Left ventricle myocardium inferior (tissue), 1 donor: ENCODE measurements at regions of chr4 and their contacts with region 1.

Region 1: DNA sequence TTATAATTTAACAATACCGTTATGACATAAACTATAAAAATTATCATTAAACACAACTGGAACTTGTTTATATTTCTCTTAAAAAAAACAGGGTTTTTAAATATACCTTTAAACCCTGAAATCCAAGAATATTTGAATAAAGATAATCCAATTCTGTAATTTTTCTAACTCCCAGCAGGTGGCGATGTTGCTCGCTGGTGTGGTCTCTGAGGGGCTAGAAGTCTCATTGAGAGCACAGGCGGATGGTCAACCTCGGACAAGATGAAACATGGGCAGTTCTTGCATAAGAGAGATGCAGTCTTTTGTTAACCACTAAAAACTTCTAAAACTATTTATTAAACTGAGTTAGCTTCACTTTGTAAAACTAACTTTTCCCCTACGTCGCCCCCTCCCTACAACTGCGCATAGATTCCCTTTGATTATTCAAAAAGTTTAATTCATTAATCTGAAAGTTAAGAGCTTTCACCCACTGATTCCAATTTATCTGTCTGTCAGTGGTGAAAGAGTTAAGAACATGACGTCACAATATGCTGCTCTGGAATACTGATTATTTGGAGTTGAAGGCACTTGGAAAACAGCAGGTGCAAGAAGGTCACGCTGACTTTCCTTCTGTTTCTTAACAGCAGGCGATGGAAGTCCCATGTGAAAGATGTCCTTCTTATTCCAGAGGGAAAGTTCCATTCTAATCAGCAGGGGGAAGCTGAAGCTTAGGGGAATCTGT is 29.5 kb downstream of the DMP1 start:
- DNase-seq: peak; percentile 36
- H3K4me3 ChIP-seq: no peak overlapping the region
- H3K27ac ChIP-seq: peak overlapping the region; percentile 78
- H3K4me1 ChIP-seq: peaks cover 28% of the 10 kb centered on the region
- H3K27me3 ChIP-seq: no peaks in the 10 kb centered on the region
- CTCF ChIP-seq: peak; percentile 82

Region 2: DNA sequence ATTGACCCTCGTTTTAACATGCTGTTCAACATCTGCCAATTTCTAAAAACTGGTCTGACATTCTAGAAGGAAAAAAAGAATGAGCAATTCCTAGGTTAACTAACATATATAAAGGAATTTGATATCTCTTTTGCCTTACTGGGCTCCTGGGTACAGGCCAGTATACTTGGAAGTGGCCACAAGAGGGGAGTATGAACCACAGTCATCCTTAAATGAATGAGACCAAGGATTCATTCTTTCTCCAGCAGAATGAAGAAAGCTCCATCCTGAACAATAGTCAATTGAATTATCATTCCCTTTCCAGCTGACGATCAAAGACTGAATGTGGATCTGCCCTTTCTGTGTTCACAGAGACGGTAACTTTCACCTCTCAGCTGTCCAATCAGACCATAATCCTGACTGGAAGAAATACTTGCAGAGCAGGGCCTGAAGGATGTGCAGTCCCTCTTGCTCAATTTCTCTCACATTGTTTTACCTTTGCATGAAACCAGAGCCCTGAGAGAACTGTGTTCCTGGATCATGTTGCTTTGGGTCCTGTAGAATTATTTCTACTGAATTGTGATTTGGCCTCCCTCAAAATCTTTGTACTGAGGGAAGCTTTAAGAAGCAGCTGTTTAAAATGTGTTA is 135.7 kb before region 1 on chr4:
- intact Hi-C with region 1: loop called (anchors 10 kb)
- DNase-seq: no peak
- H3K4me3 ChIP-seq: no peak overlapping the region
- H3K27ac ChIP-seq: peak overlapping the region; percentile 81
- H3K4me1 ChIP-seq: peaks cover 31% of the 10 kb centered on the region
- H3K27me3 ChIP-seq: no peaks in the 10 kb centered on the region
- CTCF ChIP-seq: peak; percentile 73

Region 3: DNA sequence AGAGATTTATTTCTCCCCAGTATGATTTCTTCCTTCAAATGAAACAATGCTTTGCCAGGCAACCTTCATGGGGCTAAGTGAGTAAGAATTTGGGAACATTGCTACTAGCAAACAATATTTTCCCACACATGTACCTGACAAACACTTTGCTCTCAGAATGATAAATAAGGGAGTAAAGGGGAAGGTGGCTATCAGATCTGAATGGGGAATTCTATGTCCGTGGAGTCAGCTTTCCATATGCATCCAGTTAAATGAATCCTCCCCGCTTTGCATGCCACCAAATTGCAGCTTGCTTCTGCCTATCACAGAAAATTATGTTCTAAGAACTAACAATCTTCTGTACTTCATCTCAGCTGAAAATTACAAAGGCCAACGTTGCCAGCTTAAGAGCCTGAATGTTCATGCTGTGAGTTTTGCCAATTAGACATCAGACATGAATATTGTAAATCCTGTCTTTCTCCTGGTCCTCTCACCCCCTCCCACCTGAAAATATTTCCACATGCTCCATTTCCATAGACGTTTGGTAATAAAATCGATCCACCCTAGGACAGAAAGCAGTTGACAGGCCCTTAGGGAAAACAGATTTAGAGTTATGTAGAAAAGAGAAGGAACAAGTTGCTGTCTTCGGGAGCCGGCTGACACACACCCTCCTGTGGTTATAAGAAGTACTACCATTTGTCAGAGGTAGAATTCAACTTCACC is 159.4 kb after region 1 on chr4:
- intact Hi-C with region 1: loop called (anchors 5 kb)
- DNase-seq: peak; percentile 16
- H3K4me3 ChIP-seq: no peak overlapping the region
- H3K27ac ChIP-seq: peak overlapping the region; percentile 30
- H3K4me1 ChIP-seq: peaks cover 11% of the 10 kb centered on the region
- H3K27me3 ChIP-seq: no peaks in the 10 kb centered on the region
- CTCF ChIP-seq: peak; percentile 87